Activated T-helper 1 cell treated with anti-CD3 and anti-CD28 coated beads, Interleukin-12 subunit alpha, Interleukin-12 subunit beta, Interleukin-2, Interleukin-4 antibody, amounts not matched to agents 30 ng/mL and 10 ng/mL and 1 ng/mL, durations not matched to agents 14 hours and 24 hours and 36 hours (primary cell): ENCODE measurements at regions of chr16 and their contacts with region 1.

Region 1: GRCh38 chr16:75647492-75648264 is at the starts of genes KARS1 and TERF2IP:
- DNase-seq: peak; percentile 96
- H3K4me3 Mint-ChIP-seq: peak within 1 kb of the TSS; percentile 96
- H3K27ac Mint-ChIP-seq: peak within 1 kb of the TSS; percentile 97
- H3K4me1 Mint-ChIP-seq: peaks cover 58% of the 10 kb centered on the region
- H3K27me3 Mint-ChIP-seq: no peaks in the 10 kb centered on the region
- total RNA-seq, gene KARS1: 256 and 271 TPM in 2 replicates
- total RNA-seq, gene TERF2IP: 94.3 and 98.5 TPM in 2 replicates

Region 2: GRCh38 chr16:74372953-74373846 is 1274.5 kb before region 1 on chr16:
- intact Hi-C with region 1: loop called (anchors 5 kb)
- DNase-seq: no peak
- H3K4me3 Mint-ChIP-seq: no peak overlapping the region
- H3K27ac Mint-ChIP-seq: no peak overlapping the region
- H3K4me1 Mint-ChIP-seq: peaks cover 6% of the 10 kb centered on the region
- H3K27me3 Mint-ChIP-seq: no peaks in the 10 kb centered on the region

Region 3: GRCh38 chr16:75148311-75149195 is 499.1 kb before region 1 on chr16 and contains the start of gene ZFP1:
- intact Hi-C with region 1: loop called (anchors 2 kb)
- DNase-seq: peak; percentile 90
- H3K4me3 Mint-ChIP-seq: peak within 1 kb of the TSS; percentile 90
- H3K27ac Mint-ChIP-seq: peak within 1 kb of the TSS; percentile 84
- H3K4me1 Mint-ChIP-seq: peaks cover 29% of the 10 kb centered on the region
- H3K27me3 Mint-ChIP-seq: no peaks in the 10 kb centered on the region
- total RNA-seq, gene ZFP1: 12.3 and 14.6 TPM in 2 replicates

Region 4: GRCh38 chr16:75519881-75520280 is 127.8 kb before region 1 on chr16:
- intact Hi-C with region 1: loop called (anchors 1 kb)
- DNase-seq: no peak
- H3K4me3 Mint-ChIP-seq: no peak overlapping the region
- H3K27ac Mint-ChIP-seq: no peak overlapping the region
- H3K4me1 Mint-ChIP-seq: peaks cover 5% of the 10 kb centered on the region
- H3K27me3 Mint-ChIP-seq: peaks cover 5% of the 10 kb centered on the region

Region 5: GRCh38 chr16:75566040-75566810 is 81.5 kb before region 1 on chr16 and contains the start of gene GABARAPL2:
- intact Hi-C with region 1: loop called (anchors 1 kb)
- DNase-seq: peak; percentile 87
- H3K4me3 Mint-ChIP-seq: peak within 1 kb of the TSS; percentile 99
- H3K27ac Mint-ChIP-seq: peak within 1 kb of the TSS; percentile 90
- H3K4me1 Mint-ChIP-seq: peaks cover 28% of the 10 kb centered on the region
- H3K27me3 Mint-ChIP-seq: peaks cover 5% of the 10 kb centered on the region
- total RNA-seq, gene GABARAPL2: 62.7 and 69.5 TPM in 2 replicates

Region 6: GRCh38 chr16:75764154-75764768 is 116.6 kb after region 1 on chr16:
- intact Hi-C with region 1: loop called (anchors 1 kb)
- DNase-seq: peak; percentile 35
- H3K4me3 Mint-ChIP-seq: no peak overlapping the region
- H3K27ac Mint-ChIP-seq: no peak overlapping the region
- H3K4me1 Mint-ChIP-seq: no peaks in the 10 kb centered on the region
- H3K27me3 Mint-ChIP-seq: peaks cover 12% of the 10 kb centered on the region

Region 7: GRCh38 chr16:77211880-77212740 is 1564.4 kb after region 1 on chr16:
- intact Hi-C with region 1: loop called (anchors 5 kb)
- DNase-seq: peak; percentile 68
- H3K4me3 Mint-ChIP-seq: peak overlapping the region; percentile 81
- H3K27ac Mint-ChIP-seq: peak overlapping the region; percentile 90
- H3K4me1 Mint-ChIP-seq: peaks cover 8% of the 10 kb centered on the region
- H3K27me3 Mint-ChIP-seq: peaks cover 2% of the 10 kb centered on the region